Activated T-helper 2 cell treated with anti-CD3 and anti-CD28 coated beads, Interferon-gamma antibody, Interleukin-2, Interleukin-4, amounts not matched to agents 10 μg/mL and 5 μg/mL and 100 μg/mL, durations not matched to agents 14 hours and 24 hours and 36 hours (primary cell): ENCODE measurements at regions of chr12 and their contacts with region 1.

Region 1: DNA sequence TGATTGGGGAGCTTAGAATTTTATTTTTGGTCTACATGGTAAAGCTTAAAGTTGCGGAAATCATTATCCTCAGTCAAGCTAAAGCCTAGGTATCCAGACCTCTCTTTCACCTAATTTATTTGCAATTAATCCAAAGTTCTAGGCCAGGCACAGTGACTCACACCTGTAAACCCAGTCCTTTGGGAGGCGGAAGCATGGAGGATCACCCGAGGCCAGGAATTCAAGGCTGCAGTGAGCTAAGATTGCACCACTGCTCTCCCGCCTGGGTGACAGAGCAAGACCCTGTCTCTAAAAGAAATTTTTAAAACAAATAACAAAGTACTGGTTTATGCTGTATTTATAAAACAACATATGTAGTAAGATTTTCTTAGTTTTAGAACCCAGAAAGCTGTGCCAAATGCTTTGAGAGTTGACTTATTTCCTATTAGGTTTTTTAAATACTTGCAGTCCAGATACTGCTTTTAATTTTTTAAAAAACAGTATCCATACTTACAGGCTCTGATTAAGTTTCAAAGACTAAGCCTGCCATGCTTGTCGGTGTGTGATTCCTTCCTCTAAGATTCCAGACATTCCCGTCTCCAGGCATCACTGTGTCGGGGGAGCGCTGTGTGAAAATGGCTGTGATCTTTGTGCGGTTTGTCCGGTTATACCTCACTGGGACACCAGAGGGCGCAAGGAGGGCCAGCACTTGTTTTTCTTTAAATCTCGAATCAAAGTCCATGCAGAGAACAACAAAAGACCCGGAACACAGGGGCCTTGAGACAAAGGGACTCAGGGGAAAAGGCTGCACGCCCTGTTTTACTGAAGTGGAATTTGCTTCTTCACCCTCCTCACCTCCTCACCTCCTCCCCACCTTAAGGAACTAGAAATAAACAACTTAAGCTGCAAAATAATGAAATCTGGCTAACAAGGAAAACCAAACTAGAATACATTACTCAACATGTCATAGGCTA is 24.6 kb upstream of the TMPO start:
- DNase-seq: peak; percentile 72
- H3K4me3 Mint-ChIP-seq: peak overlapping the region; percentile 26
- H3K27ac Mint-ChIP-seq: peak overlapping the region; percentile 89
- H3K4me1 Mint-ChIP-seq: peaks cover 10% of the 10 kb centered on the region
- H3K27me3 Mint-ChIP-seq: peaks cover 2% of the 10 kb centered on the region

Region 2: DNA sequence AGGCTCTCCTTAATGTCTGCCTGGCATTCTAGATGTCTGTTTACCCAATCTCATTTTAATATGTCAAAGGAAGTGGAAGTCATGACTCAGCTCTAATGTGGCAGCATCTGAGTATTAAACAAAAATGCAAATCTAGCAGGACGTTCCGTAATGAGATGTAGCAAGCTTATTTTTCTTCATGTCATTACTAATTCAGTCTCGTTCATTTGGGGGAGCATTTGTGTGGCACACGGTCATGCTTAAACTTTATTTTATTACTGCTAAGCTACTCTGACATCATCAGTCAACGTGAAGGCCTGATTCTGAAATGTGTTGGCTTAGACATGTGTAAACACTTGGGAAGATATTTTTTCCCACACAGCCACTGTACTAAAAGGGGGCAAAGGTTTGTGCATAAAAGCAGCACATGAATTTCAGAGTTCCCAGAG is 302.1 kb before region 1 on chr12:
- intact Hi-C with region 1: no loop called
- DNase-seq: no peak
- H3K4me3 Mint-ChIP-seq: no peak overlapping the region
- H3K27ac Mint-ChIP-seq: no peak overlapping the region
- H3K4me1 Mint-ChIP-seq: no peaks in the 10 kb centered on the region
- H3K27me3 Mint-ChIP-seq: no peaks in the 10 kb centered on the region

Region 3: GRCh38 chr12:98516184-98516873 is 25.6 kb after region 1 on chr12:
- intact Hi-C with region 1: loop called (anchors 1 kb)
- DNase-seq: peak; percentile 83
- H3K4me3 Mint-ChIP-seq: peak overlapping the region; percentile 92
- H3K27ac Mint-ChIP-seq: peak overlapping the region; percentile 98
- H3K4me1 Mint-ChIP-seq: peaks cover 22% of the 10 kb centered on the region
- H3K27me3 Mint-ChIP-seq: no peaks in the 10 kb centered on the region

Region 4: GRCh38 chr12:98532681-98533304 is 42.0 kb after region 1 on chr12:
- intact Hi-C with region 1: loop called (anchors 1 kb)
- DNase-seq: no peak
- H3K4me3 Mint-ChIP-seq: no peak overlapping the region
- H3K27ac Mint-ChIP-seq: no peak overlapping the region
- H3K4me1 Mint-ChIP-seq: peaks cover 29% of the 10 kb centered on the region
- H3K27me3 Mint-ChIP-seq: no peaks in the 10 kb centered on the region

Region 5: GRCh38 chr12:98653866-98654493 is 163.2 kb after region 1 on chr12:
- intact Hi-C with region 1: loop called (anchors 1 kb)
- DNase-seq: no peak
- H3K4me3 Mint-ChIP-seq: no peak overlapping the region
- H3K27ac Mint-ChIP-seq: no peak overlapping the region
- H3K4me1 Mint-ChIP-seq: peaks cover 20% of the 10 kb centered on the region
- H3K27me3 Mint-ChIP-seq: no peaks in the 10 kb centered on the region

Region 6: GRCh38 chr12:98788396-98788795 is 297.6 kb after region 1 on chr12:
- intact Hi-C with region 1: no loop called
- DNase-seq: no peak
- H3K4me3 Mint-ChIP-seq: no peak overlapping the region
- H3K27ac Mint-ChIP-seq: no peak overlapping the region
- H3K4me1 Mint-ChIP-seq: no peaks in the 10 kb centered on the region
- H3K27me3 Mint-ChIP-seq: peaks cover 20% of the 10 kb centered on the region